AG04450 (cell line): ENCODE measurements at regions of chr2 and their contacts with region 1.

Region 1: DNA sequence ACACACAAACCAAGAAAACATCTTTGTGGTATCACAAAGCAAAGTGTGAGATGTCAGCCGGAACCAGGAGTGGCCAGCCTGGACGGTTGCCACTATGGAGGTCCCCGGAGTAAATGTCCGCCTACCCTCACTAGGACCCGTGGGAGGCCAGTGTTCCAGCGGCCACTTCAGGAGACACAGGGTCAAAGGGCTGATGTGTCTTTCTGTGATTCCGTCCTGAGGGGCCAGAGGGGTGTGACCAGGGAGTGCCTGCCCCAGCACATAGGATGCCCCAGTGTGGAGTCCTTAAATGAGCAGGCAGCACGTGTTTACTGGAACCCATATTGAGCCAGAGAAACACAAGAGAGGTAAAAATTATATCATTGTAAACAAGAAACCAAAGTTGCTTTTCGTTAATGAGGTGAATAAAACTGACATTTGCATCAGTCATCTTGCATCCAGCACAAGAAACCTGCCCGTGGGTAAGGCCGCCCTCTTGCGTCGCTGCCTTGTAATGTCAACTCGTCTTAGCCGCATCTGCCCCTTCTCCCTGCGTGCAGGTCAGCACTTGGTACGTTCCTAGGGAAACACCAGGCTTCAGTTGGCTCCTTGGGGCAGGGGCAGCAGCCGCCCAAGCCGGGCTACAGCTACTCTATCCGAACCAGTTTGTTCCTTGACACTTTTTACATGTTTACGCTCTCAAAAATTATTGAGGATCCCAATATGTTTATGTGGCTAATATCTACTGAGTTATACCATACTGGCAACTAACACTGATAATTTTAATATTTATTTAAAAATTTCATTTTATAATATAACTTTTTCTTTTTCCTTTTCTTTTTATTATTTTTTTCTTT is 46.7 kb upstream of the LAPTM4A start:
- DNase-seq: peak; percentile 82
- H3K4me3 ChIP-seq: no peak overlapping the region
- H3K27ac ChIP-seq: no peak overlapping the region
- H3K27me3 ChIP-seq: no peaks in the 10 kb centered on the region
- CTCF ChIP-seq: peak; percentile 90

Region 2: DNA sequence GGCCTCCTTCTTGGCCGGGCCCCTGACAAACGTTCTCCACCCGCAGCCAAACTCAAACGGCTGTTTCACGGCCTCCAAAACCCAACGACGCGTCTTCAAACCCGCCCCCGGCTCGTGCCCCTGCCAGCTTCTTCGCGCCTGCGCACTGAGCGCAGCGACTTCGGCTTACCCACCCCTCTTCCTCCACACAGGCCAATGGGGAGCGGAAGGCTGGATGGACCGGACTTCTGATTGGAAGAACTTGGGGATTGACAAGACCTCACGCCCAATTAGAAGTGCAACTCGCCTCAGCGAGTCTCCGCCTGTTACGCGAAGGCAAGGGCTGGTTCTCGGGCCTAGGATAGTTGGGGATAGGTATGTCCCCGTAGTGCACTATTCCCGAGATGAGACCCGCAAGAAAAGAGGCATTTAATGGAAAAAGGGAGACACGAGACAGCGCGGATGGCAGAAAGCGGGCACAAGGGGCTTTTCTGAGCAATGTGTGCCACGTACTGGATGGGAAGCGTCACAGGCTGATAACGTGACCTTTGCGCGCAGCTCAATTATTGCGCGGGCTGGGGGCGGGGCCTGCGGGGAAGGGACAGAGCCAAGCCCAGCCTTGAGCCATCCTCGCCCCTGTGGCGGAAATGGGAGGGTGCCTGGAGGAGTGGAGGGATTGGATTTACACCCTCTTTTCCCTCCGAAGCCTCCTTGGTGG is 46.4 kb before region 1 on chr2 and contains the start of gene LAPTM4A:
- CTCF ChIA-PET with region 1: interaction called, 16 read pairs
- POLR2A ChIA-PET with region 1: interaction called, 33 read pairs
- DNase-seq: peak; percentile 100
- H3K4me3 ChIP-seq: peak within 1 kb of the TSS; percentile 97
- H3K27ac ChIP-seq: peak within 1 kb of the TSS; percentile 100
- H3K27me3 ChIP-seq: no peaks in the 10 kb centered on the region
- CTCF ChIP-seq: 0 out of 2 replicates have a peak, but pooled peaks have one; percentile 10
- polyA plus RNA-seq, gene LAPTM4A: 1,309 and 1,416 TPM in 2 replicates

Region 3: DNA sequence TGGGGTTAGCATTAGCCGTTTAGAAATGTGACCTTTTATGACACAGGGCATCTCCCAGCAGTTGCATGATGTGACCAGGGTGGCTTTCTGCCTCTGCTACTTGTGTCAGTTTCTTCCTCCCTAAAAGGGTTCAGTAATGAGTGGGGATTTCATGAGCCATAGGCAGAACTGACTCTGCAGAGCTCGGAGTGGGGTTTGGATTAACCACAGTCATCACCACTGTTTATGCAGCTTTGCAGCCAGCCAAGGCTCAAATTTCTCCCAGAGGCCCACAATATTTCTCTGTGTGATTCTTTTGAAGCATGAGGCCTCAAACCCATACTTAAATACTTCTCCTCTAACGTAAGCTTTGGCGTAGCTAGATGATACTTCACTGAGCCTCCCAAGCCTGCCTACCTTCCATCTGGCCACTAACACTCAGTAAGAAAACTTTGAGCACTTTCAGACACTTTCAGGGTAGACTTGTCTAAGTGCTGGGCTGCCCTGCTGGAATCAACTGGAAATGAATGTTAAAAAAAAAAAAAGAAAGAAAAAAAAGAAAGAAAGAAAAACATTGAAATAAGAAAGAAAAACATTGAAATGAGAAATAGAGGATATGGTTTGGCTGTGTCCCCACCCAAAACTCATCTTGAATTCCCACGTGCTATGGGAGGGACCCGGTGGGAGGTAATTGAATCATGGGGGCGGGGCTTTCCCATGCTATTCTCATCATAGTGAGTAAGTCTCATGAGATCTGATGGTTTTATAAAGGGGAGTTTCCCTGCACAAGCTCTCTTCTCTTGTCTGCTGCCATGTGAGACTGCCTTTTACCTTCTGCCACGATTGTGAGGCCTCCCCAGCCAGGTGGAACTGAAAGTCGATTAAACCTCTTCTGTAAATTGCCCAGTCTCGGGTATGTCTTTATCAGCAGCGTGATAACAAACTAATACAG is 35.2 kb before region 1 on chr2:
- CTCF ChIA-PET with region 1: interaction called, 6 read pairs
- POLR2A ChIA-PET with region 1: interaction called, 29 read pairs
- DNase-seq: peak; percentile 96
- H3K4me3 ChIP-seq: no peak overlapping the region
- H3K27ac ChIP-seq: peak overlapping the region; percentile 95
- H3K27me3 ChIP-seq: no peaks in the 10 kb centered on the region
- CTCF ChIP-seq: peak; percentile 41

Region 4: GRCh38 chr2:20157193-20157891 is 59.2 kb after region 1 on chr2:
- CTCF ChIA-PET with region 1: no interaction called
- POLR2A ChIA-PET with region 1: no interaction called
- DNase-seq: no peak
- H3K4me3 ChIP-seq: no peak overlapping the region
- H3K27ac ChIP-seq: no peak overlapping the region
- H3K27me3 ChIP-seq: no peaks in the 10 kb centered on the region
- CTCF ChIP-seq: no peak

Region 5: GRCh38 chr2:20179755-20180594 is 81.9 kb after region 1 on chr2:
- CTCF ChIA-PET with region 1: no interaction called
- POLR2A ChIA-PET with region 1: no interaction called
- DNase-seq: no peak
- H3K4me3 ChIP-seq: no peak overlapping the region
- H3K27ac ChIP-seq: no peak overlapping the region
- H3K27me3 ChIP-seq: no peaks in the 10 kb centered on the region
- CTCF ChIP-seq: no peak